ENCODE measurements at regions of chr2 and their contacts with region 1.

Region 1: DNA sequence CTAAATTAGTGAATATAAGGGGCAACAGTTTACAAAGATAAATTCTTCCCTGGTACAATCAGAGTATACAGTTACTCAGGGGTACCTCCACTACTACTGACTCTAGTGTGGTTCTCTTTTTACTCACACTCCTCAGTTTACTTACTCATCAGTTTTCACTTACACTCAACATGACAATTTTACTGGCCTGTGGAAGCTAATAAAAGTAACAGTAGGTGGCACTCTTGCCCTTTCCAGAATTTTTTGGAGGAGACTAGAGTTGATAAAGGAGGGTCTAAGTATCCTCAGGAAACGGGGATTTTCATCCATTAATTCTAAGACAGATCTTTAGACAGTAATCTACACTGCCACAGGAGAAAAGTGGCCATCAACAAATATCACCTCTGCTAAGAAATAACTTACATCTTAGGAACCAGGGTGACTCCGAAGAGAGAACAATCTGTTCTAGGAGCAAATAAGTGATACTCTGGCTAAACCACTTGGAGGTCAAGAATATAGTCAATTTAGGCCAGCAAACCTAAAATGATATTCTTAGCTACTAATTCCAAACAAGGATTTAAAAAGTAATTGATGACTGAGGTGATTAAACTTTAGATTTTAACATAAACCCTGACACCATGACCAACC is 61.3 kb downstream of the ATL2 start:
- DNase-seq: peak in 4 of 5 donors; percentile 33 to 54 (median 37)
- H3K4me3 ChIP-seq: no peak overlapping the region
- H3K4me3 Mint-ChIP-seq: no peak overlapping the region
- H3K27ac ChIP-seq: no peak overlapping the region
- H3K27ac Mint-ChIP-seq: peak overlapping the region in 3 of 7 donors; percentile 19 to 83 (median 57)
- H3K4me1 ChIP-seq: no peaks in the 10 kb centered on the region
- H3K4me1 Mint-ChIP-seq: no peaks in the 10 kb centered on the region
- H3K27me3 ChIP-seq: no peaks in the 10 kb centered on the region
- H3K27me3 Mint-ChIP-seq: no peaks in the 10 kb centered on the region

Region 2: GRCh38 chr2:38106405-38107094 is 209.3 kb before region 1 on chr2:
- CTCF ChIA-PET with region 1: no interaction called
- POLR2A ChIA-PET with region 1: no interaction called
- intact Hi-C with region 1: no loop called
- DNase-seq: no peak
- H3K4me3 ChIP-seq: no peak overlapping the region
- H3K4me3 Mint-ChIP-seq: no peak overlapping the region
- H3K27ac ChIP-seq: no peak overlapping the region
- H3K27ac Mint-ChIP-seq: peak overlapping the region in 1 of 7 donors; percentile 5
- H3K4me1 ChIP-seq: no peaks in the 10 kb centered on the region
- H3K4me1 Mint-ChIP-seq: no peaks in the 10 kb centered on the region
- H3K27me3 ChIP-seq: peaks cover 6% of the 10 kb centered on the region
- H3K27me3 Mint-ChIP-seq: peaks cover 13 to 29% of the 10 kb centered on the region in 2 donors

Region 3: DNA sequence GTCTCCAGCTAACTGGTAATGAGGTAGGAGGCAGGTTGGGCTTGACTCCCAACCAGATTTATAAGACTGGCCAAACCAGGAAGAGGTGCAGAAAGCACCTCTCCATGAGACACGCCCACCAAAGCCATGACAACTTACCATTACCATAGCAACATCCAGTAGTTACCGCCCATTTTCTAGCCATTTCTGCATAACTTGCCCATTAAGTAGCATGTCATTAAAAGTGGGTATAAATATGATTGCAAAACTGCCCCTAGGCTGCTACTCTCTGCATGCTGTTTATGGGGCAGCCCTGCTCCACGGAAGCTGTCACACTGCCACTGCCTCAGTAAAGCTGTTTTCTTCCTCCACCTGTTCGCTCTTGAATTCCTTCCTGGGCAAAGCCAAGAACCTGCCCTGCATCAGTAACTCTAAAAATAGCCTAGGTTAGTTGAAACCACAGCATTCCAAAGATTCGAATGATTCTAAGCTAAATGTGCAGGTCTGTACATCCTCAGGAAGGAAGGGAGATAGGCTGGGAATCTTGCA is 70.6 kb before region 1 on chr2:
- CTCF ChIA-PET with region 1: no interaction called
- POLR2A ChIA-PET with region 1: no interaction called
- intact Hi-C with region 1: no loop called
- DNase-seq: no peak
- H3K4me3 ChIP-seq: no peak overlapping the region
- H3K4me3 Mint-ChIP-seq: no peak overlapping the region
- H3K27ac ChIP-seq: no peak overlapping the region
- H3K27ac Mint-ChIP-seq: no peak overlapping the region
- H3K4me1 ChIP-seq: no peaks in the 10 kb centered on the region
- H3K4me1 Mint-ChIP-seq: no peaks in the 10 kb centered on the region
- H3K27me3 ChIP-seq: no peaks in the 10 kb centered on the region
- H3K27me3 Mint-ChIP-seq: no peaks in the 10 kb centered on the region

Region 4: GRCh38 chr2:38377050-38377828 is 61.4 kb after region 1 on chr2 and contains the start of gene ATL2:
- CTCF ChIA-PET with region 1: interaction called, 20 read pairs
- POLR2A ChIA-PET with region 1: interaction called, 5 read pairs
- intact Hi-C with region 1: loop called (anchors 5 kb)
- DNase-seq: peak; percentile 91 to 97 (median 94)
- H3K4me3 ChIP-seq: peak within 1 kb of the TSS; percentile 67 to 85
- H3K4me3 Mint-ChIP-seq: peak within 1 kb of the TSS; percentile 93 to 100 (median 96)
- H3K27ac ChIP-seq: peak within 1 kb of the TSS; percentile 89
- H3K27ac Mint-ChIP-seq: peak within 1 kb of the TSS; percentile 90 to 98 (median 97)
- H3K4me1 ChIP-seq: peaks cover 63% of the 10 kb centered on the region
- H3K4me1 Mint-ChIP-seq: peaks cover 45 to 81% (median 65%) of the 10 kb centered on the region in 4 donors
- H3K27me3 ChIP-seq: no peaks in the 10 kb centered on the region
- H3K27me3 Mint-ChIP-seq: no peaks in the 10 kb centered on the region
- total RNA-seq, gene ATL2: 51.5 to 64.3 TPM

Region 5: GRCh38 chr2:38465789-38466127 is 149.9 kb after region 1 on chr2:
- CTCF ChIA-PET with region 1: interaction called, 84 read pairs
- POLR2A ChIA-PET with region 1: no interaction called
- intact Hi-C with region 1: loop called (anchors 1 kb)
- DNase-seq: peak in 4 of 5 donors; percentile 5 to 14 (median 7)
- H3K4me3 ChIP-seq: no peak overlapping the region
- H3K4me3 Mint-ChIP-seq: no peak overlapping the region
- H3K27ac ChIP-seq: no peak overlapping the region
- H3K27ac Mint-ChIP-seq: no peak overlapping the region
- H3K4me1 ChIP-seq: no peaks in the 10 kb centered on the region
- H3K4me1 Mint-ChIP-seq: peaks cover 0 to 2% (median 0%) of the 10 kb centered on the region in 4 donors
- H3K27me3 ChIP-seq: no peaks in the 10 kb centered on the region
- H3K27me3 Mint-ChIP-seq: peaks cover 0 to 6% of the 10 kb centered on the region in 2 donors

Region 6: GRCh38 chr2:38515160-38516074 is 199.6 kb after region 1 on chr2:
- CTCF ChIA-PET with region 1: interaction called, 242 read pairs
- POLR2A ChIA-PET with region 1: interaction called, 3 read pairs
- intact Hi-C with region 1: no loop called
- DNase-seq: no peak
- H3K4me3 ChIP-seq: no peak overlapping the region
- H3K4me3 Mint-ChIP-seq: no peak overlapping the region
- H3K27ac ChIP-seq: no peak overlapping the region
- H3K27ac Mint-ChIP-seq: no peak overlapping the region
- H3K4me1 ChIP-seq: no peaks in the 10 kb centered on the region
- H3K4me1 Mint-ChIP-seq: no peaks in the 10 kb centered on the region
- H3K27me3 ChIP-seq: no peaks in the 10 kb centered on the region
- H3K27me3 Mint-ChIP-seq: peaks cover 4 to 5% of the 10 kb centered on the region in 2 donors

Region 7: GRCh38 chr2:38690499-38691294 is 374.9 kb after region 1 on chr2:
- CTCF ChIA-PET with region 1: no interaction called
- POLR2A ChIA-PET with region 1: no interaction called
- intact Hi-C with region 1: no loop called
- DNase-seq: no peak
- H3K4me3 ChIP-seq: no peak overlapping the region
- H3K4me3 Mint-ChIP-seq: peak overlapping the region in 6 of 8 donors; percentile 46 to 68 (median 60)
- H3K27ac ChIP-seq: no peak overlapping the region
- H3K27ac Mint-ChIP-seq: peak overlapping the region; percentile 44 to 89 (median 82)
- H3K4me1 ChIP-seq: peaks cover 69% of the 10 kb centered on the region
- H3K4me1 Mint-ChIP-seq: peaks cover 44 to 76% (median 59%) of the 10 kb centered on the region in 4 donors
- H3K27me3 ChIP-seq: no peaks in the 10 kb centered on the region
- H3K27me3 Mint-ChIP-seq: no peaks in the 10 kb centered on the region

Region 8: DNA sequence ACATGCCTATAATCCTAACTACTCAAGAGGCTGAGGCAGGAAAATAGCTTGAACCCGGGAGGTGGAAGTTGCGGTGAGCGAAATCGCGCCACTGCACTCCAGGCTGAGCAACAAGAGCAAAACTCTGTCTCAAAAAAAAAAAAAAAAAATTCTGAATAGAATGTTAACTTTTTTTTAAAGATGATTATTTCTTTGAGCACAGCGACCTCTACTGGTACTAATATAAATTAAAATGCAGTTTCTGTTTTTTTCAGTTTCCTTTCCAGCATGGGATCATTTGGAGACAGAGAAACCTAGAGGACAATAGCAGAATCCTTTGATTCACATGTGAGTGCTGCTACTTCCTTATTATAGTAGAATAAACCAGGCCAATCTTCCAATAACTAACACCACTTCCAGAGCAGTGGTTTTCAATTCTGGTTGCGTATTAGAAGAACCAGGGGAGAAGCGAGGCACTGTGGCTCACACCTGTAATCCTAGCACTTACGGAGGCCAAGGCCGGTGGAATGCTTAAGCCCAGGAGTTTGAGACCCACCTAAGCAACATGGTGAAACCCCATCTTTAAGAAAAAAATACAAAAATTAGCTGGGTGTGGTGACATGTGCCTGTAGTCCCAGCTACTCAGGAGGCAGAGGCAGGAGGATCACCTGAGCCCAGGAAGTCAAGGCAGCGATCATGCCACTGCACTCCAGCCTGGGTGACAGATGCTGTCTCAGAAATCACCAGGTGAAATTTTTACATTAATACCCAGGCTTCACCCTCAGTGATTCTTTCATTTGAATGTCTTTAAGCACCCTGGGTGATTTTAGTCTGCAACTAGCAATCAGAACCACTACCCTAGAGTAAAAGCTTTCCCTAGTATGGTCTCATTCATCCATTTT is 425.3 kb after region 1 on chr2:
- CTCF ChIA-PET with region 1: interaction called, 4 read pairs
- POLR2A ChIA-PET with region 1: no interaction called
- intact Hi-C with region 1: loop called (anchors 5 kb)
- DNase-seq: peak; percentile 60 to 71 (median 65)
- H3K4me3 ChIP-seq: no peak overlapping the region
- H3K4me3 Mint-ChIP-seq: peak overlapping the region in 4 of 8 donors; percentile 15 to 39 (median 27)
- H3K27ac ChIP-seq: no peak overlapping the region
- H3K27ac Mint-ChIP-seq: peak overlapping the region; percentile 30 to 99 (median 83)
- H3K4me1 ChIP-seq: peaks cover 54% of the 10 kb centered on the region
- H3K4me1 Mint-ChIP-seq: peaks cover 31 to 78% (median 44%) of the 10 kb centered on the region in 4 donors
- H3K27me3 ChIP-seq: no peaks in the 10 kb centered on the region
- H3K27me3 Mint-ChIP-seq: no peaks in the 10 kb centered on the region

Region 9: GRCh38 chr2:39033980-39034379 is 718.2 kb after region 1 on chr2:
- CTCF ChIA-PET with region 1: no interaction called
- POLR2A ChIA-PET with region 1: no interaction called
- intact Hi-C with region 1: no loop called
- DNase-seq: no peak
- H3K4me3 ChIP-seq: no peak overlapping the region
- H3K4me3 Mint-ChIP-seq: no peak overlapping the region
- H3K27ac ChIP-seq: no peak overlapping the region
- H3K27ac Mint-ChIP-seq: peak overlapping the region in 1 of 7 donors; percentile 72
- H3K4me1 ChIP-seq: no peaks in the 10 kb centered on the region
- H3K4me1 Mint-ChIP-seq: peaks cover 0 to 4% (median 3%) of the 10 kb centered on the region in 4 donors
- H3K27me3 ChIP-seq: no peaks in the 10 kb centered on the region
- H3K27me3 Mint-ChIP-seq: no peaks in the 10 kb centered on the region

Measured in CD4-positive, alpha-beta memory T cell (primary cell).